Activated CD4-positive, alpha-beta memory T cell treated with anti-CD3 and anti-CD28 coated beads, Interleukin-2, amount 10 ng/mL, durations not matched to agents 7 days and 5 days (primary cell): ENCODE measurements at regions of chr1 and their contacts with region 1.

Region 1: GRCh38 chr1:116934586-116935207 is 25.0 kb downstream of the PTGFRN start:
- DNase-seq: no peak
- H3K4me3 Mint-ChIP-seq: no peak overlapping the region
- H3K27ac Mint-ChIP-seq: peak overlapping the region; percentile 17
- H3K4me1 Mint-ChIP-seq: peaks cover 24% of the 10 kb centered on the region
- H3K27me3 Mint-ChIP-seq: no peaks in the 10 kb centered on the region

Region 2: DNA sequence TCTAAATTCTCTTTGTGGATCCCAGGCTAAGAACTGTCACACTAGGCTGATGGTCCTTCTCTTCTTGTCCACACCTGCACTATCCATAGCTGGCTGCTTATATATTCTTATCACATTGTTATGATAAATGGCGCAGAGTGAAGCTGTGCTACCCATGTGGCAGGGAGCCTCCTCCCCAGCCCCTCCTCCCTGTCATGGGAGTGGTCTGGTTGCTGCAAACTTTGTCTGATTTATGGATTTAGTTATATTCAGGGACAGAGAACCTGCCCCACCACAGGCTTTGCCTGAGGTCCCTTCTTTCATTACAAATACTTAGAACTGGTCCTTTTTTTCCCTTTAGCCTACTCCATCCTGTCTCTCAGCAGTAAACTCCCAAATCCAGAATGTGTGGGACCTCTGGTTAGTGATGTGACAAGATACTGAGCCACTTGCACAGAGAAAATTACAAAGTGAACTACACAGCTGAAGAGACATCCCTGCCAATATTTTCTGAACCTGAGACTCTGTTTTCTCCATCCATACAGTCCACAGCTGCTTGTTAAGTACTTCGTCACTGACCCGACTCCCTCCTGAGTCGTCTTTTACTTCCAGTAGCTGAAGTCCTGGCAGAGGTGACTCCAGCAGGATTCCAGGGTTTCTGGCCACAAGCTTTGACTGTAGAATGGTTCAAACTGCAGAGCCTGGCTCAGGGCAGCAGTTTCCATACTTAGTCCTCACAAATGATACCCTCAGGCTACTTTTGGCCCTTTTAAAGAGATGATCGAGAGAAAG is 12.6 kb after region 1 on chr1:
- CTCF ChIA-PET with region 1: interaction called, 11 read pairs
- POLR2A ChIA-PET with region 1: no interaction called
- DNase-seq: no peak
- H3K4me3 Mint-ChIP-seq: no peak overlapping the region
- H3K27ac Mint-ChIP-seq: no peak overlapping the region
- H3K4me1 Mint-ChIP-seq: peaks cover 16% of the 10 kb centered on the region
- H3K27me3 Mint-ChIP-seq: no peaks in the 10 kb centered on the region

Region 3: DNA sequence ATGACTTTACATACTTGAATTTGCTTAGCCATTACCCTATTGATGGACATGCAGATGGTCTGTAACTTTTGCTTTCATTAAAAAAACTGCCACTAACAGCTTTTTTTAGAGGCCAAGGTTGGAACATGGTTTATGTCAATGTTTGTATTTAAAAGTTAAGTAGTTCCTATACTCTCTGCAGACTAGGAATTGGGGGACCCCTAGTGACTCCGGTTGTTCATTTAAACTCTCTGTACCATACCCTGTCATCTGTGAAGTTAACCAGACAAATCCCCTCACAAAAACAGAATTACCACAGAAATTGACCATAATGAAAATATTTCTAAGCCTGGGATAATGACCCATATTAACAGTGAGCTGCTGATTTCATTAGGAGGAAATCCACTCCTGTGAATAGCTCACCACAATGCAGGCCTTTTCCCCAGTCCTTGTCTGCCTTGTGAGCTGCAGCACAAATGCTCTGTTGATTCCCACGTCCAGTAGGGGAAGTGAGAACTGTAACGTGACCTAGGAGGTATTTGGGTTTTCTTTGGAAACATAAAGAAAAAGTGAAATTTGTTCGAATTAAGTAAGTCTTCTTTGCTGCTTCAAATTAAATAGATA is 36.7 kb after region 1 on chr1:
- CTCF ChIA-PET with region 1: no interaction called
- POLR2A ChIA-PET with region 1: no interaction called
- DNase-seq: no peak
- H3K4me3 Mint-ChIP-seq: no peak overlapping the region
- H3K27ac Mint-ChIP-seq: no peak overlapping the region
- H3K4me1 Mint-ChIP-seq: no peaks in the 10 kb centered on the region
- H3K27me3 Mint-ChIP-seq: peaks cover 2% of the 10 kb centered on the region